Pancreas (tissue), 10 donors: ENCODE measurements at regions of chr9 and their contacts with region 1.

Region 1: DNA sequence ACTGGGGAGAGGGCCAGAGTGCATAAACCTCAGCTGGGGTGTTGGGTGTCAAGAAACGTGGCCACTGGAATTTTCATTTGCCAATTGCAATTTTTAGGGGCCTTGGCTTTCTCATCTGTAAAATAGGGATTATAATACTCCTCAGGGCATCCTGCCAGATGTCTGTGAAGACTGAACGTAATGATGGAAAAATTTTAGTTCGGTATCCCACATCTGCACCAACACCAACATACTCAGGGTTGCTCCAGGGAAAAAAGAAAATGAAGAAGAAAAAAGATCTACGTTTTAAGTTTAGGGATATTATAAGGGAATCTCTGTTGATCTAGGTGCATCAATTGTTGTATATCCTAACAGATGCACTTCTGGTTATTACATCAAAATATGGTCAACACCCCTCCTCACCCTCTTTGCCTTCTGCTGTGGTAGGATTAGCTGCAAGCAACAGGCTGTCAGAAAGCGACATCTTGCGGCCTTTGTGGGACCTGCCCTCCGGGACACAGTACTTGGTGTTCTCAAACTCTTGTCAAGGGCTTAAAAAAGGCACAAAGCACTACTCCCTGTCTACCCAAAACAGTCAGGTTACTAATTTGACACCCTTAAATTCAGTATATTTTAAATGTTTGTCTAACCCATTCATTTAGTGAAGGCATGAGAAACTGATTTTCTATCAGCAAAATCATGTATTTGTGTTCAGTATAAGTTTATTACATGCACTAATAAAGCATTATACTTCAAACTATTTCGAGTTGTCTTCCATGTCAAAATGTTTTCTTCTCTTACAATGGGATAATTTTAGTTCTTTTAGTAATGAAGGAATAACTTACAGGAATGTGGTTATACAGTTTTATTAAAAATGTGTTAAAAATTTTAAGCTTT is 8.3 kb upstream of the TBC1D2 start:
- DNase-seq: peak; percentile 54 to 84 (median 70)
- ATAC-seq: peak; percentile 86 to 100 (median 98)
- H3K4me3 ChIP-seq: no peak overlapping the region
- H3K27ac ChIP-seq: no peak overlapping the region
- H3K4me1 ChIP-seq: no peaks in the 10 kb centered on the region
- H3K27me3 ChIP-seq: no peaks in the 10 kb centered on the region
- CTCF ChIP-seq: peak; percentile 43 to 92 (median 80)

Region 2: DNA sequence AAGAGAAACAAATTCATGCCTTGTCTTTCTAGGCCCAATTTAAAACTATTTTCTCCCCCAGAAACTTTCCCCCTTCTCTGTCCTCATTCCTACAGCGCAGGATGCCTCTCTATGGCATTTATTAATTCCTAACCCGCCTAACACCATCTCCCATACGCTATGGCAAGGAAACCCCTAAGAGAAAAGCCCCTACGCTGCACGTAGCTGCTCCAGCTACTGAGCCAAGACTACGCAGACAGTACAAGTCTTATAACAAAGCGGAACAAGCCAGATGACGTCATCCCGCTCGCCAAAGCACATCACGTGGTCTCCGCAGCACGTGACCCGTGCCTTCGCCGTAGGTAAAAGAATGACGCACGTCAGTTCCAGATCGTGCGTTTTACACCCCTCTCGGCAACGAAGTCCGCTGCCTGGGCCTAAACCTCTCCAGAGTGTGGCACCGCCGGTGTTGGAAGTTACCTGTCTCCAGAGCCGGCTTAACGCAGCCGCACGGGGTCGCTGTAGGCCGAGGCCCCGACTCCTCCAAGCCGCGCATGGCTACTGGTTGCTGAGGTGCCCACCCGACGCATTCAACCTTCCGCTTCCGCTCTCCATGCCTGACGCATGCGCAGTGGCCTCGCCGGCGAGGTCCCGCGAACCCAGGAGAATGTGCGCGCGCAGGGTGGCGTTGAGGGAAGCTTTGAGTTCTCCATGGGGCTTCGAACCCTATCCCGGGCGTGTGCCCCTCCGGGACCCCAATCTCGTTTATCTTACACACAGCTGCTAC is 341.6 kb before region 1 on chr9 and contains the start of gene TRMO:
- intact Hi-C with region 1: loop called in 1 of 3 experiments (anchors 5 kb)
- DNase-seq: peak; percentile 96 to 100 (median 98)
- ATAC-seq: peak; percentile 90 to 95 (median 94)
- H3K4me3 ChIP-seq: peak within 1 kb of the TSS; percentile 35 to 61 (median 46)
- H3K27ac ChIP-seq: peak within 1 kb of the TSS; percentile 99 to 100 (median 100)
- H3K4me1 ChIP-seq: peaks cover 5 to 12% (median 12%) of the 10 kb centered on the region in 3 donors
- H3K27me3 ChIP-seq: no peaks in the 10 kb centered on the region
- CTCF ChIP-seq: peak in 3 of 4 donors; percentile 26 to 39 (median 34)
- total RNA-seq, gene TRMO: 5.2 to 8.7 (median 6.5) TPM

Region 3: GRCh38 chr9:97982683-97983588 is 280.8 kb before region 1 on chr9 and contains the start of gene ANP32B:
- intact Hi-C with region 1: no loop called
- DNase-seq: peak; percentile 87 to 97 (median 92)
- ATAC-seq: peak; percentile 87 to 94 (median 89)
- H3K4me3 ChIP-seq: peak within 1 kb of the TSS; percentile 82 to 96 (median 95)
- H3K27ac ChIP-seq: peak within 1 kb of the TSS; percentile 88 to 95 (median 92)
- H3K4me1 ChIP-seq: peaks cover 12 to 17% (median 17%) of the 10 kb centered on the region in 3 donors
- H3K27me3 ChIP-seq: no peaks in the 10 kb centered on the region
- CTCF ChIP-seq: peak; percentile 82 to 90 (median 88)
- total RNA-seq, gene ANP32B: 48.8 to 89.3 (median 65.3) TPM

Region 4: GRCh38 chr9:98074115-98074990 is 189.4 kb before region 1 on chr9:
- intact Hi-C with region 1: loop called in 2 of 3 experiments (anchors 10 kb)
- DNase-seq: peak in 5 of 6 donors; percentile 23 to 84 (median 48)
- ATAC-seq: peak; percentile 60 to 84 (median 76)
- H3K4me3 ChIP-seq: no peak overlapping the region
- H3K27ac ChIP-seq: no peak overlapping the region
- H3K4me1 ChIP-seq: peaks cover 0 to 13% (median 0%) of the 10 kb centered on the region in 3 donors
- H3K27me3 ChIP-seq: no peaks in the 10 kb centered on the region
- CTCF ChIP-seq: peak; percentile 83 to 96 (median 90)

Region 5: GRCh38 chr9:98207606-98208005 is 56.1 kb before region 1 on chr9:
- intact Hi-C with region 1: loop called in 1 of 3 experiments (anchors 5 kb)
- DNase-seq: no peak
- ATAC-seq: no peak
- H3K4me3 ChIP-seq: no peak overlapping the region
- H3K27ac ChIP-seq: no peak overlapping the region
- H3K4me1 ChIP-seq: no peaks in the 10 kb centered on the region
- H3K27me3 ChIP-seq: no peaks in the 10 kb centered on the region
- CTCF ChIP-seq: no peak

Region 6: GRCh38 chr9:98333703-98334582 is 70.2 kb after region 1 on chr9:
- intact Hi-C with region 1: no loop called
- DNase-seq: no peak
- ATAC-seq: no peak
- H3K4me3 ChIP-seq: no peak overlapping the region
- H3K27ac ChIP-seq: no peak overlapping the region
- H3K4me1 ChIP-seq: no peaks in the 10 kb centered on the region
- H3K27me3 ChIP-seq: no peaks in the 10 kb centered on the region
- CTCF ChIP-seq: no peak